K562 (cell line): ENCODE measurements at regions of chr12 and their contacts with region 1.

Region 1: DNA sequence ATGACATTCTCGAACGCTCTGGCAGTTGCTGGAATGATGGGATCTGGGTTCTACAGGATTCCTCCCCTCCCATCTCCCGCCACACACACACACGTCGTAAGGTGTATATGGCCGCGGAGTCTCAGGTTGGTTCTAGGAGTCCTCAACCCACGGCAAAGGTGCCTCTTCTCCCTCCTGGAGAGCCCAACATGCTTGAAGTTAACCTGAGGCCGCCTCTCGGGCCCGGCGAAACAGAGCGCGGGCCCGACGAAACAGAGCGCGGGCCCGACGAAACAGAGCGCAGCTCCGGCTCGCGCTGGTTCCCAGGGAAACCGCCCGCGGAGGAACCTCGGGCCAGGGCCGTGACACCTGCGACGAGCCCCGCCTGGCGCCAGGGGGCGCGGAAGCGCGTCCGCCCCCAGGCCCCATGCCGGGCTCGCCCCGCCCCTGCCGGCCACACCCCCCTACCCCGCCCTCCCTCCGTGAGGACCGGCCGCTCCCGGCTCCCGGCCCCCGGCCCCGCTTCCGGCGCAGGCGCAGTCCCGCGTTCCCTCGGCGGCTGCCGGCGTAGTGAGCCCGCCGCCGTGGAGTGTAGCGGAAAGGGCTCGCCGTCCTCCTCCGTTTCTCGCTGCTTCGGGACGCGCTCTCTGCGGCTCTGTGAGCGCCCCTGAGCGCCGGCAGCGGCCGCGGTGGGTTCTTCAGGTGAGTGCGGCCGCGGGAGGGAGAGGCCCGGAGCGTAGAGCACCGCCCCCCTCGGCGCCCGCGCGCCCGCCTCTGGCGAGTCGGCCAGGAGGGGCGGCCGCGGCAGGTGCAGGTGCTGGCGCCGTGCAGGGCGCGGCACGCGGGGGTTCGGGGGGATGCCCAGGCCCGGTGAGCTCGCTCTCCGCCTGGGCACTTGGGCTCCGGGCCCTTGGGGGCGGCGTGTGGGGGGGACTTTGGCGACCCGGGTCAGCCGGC is at the start of gene RAB3IP:
- DNase-seq: peak; percentile 90 to 99 (median 99)
- ATAC-seq: peak; percentile 98
- H3K4me3 ChIP-seq: peak within 1 kb of the TSS; percentile 68
- H3K27ac ChIP-seq: no peak within 1 kb of the TSS; the same call in 2 of the 3 replicates
- H3K4me1 ChIP-seq: peaks cover 6 to 14% of the 10 kb centered on the region in 2 experiments; a peak in 4 of 5 replicates
- H3K27me3 ChIP-seq: peaks cover 4 to 10% of the 10 kb centered on the region in 2 experiments; a peak in 4 of 5 replicates
- CTCF ChIP-seq: peak; percentile 52 to 81 (median 77); a peak in 5 of 6 replicates
- EP300 ChIP-seq: no peak; the same call in 1 of the 2 replicates
- POLR2A ChIP-seq: peak; percentile 54; the same call in 1 of the 2 replicates
- RAD21 ChIP-seq: peak in 1 of 2 experiments; percentile 32; a peak in 2 of 4 replicates
- polyA plus RNA-seq, gene RAB3IP: 5.6 to 11.3 TPM

Region 2: DNA sequence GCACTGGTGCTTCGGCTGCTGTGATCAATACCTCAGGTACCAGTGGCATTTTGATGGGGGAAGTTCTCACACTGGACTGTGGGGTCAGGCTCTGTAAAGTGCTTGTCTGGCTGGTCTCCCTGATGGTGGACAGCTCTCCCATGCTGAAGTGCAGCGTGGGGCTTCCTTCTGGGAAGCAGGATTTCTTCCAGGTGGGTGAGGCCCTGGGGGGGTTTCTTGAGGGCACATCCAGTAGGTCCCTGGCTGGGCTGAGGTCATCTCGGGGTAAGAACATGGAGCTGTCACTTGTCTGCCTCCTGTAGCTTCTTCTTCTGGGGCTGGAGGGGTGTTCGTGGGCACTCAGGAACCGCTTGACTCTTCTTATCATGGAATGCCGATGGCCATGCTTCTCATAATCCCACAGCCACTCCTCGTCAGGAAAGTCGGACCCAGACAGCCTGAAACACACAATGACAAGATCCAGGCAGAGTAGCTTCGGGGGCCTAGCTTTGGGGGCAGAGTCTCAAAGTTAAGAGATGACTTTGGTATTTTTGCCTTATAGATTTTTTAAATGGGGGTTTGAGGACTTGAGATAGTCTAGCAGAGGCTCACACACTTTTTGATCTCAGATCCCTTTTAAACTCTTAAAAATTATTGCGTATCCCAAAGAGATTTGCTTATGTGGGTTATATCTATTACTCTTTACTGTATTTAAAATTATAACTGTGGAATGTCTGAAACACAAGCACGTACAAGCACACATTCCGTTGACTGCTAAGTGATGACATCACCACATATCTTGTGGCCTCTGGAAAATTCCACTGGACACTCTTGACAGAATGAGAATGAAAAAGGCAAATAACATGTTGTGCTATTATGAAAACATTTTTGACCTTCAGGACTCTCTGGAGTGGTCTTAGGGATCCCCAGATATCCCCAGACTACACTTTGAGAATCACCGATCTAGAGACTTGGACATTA is 83.0 kb before region 1 on chr12:
- CTCF ChIA-PET with region 1: no interaction called
- POLR2A ChIA-PET with region 1: no interaction called
- in situ Hi-C with region 1: no loop called
- intact Hi-C with region 1: loop called (anchors 5 kb)
- DNase-seq: no peak
- ATAC-seq: no peak
- H3K4me3 ChIP-seq: no peak overlapping the region
- H3K27ac ChIP-seq: no peak overlapping the region
- H3K4me1 ChIP-seq: peaks cover 23 to 53% of the 10 kb centered on the region in 2 experiments
- H3K27me3 ChIP-seq: no peaks in the 10 kb centered on the region
- CTCF ChIP-seq: no peak
- EP300 ChIP-seq: no peak
- POLR2A ChIP-seq: no peak
- RAD21 ChIP-seq: no peak